Endothelial cell of umbilical vein (primary cell): ENCODE measurements at regions of chr13 and their contacts with region 1.

Region 1: GRCh38 chr13:106349080-106349931 is 186.2 kb downstream of the EFNB2 start:
- DNase-seq: peak; percentile 99
- H3K4me3 ChIP-seq: peak overlapping the region in 2 of 3 experiments; percentile 17 to 52
- H3K27ac ChIP-seq: peak overlapping the region; percentile 98
- H3K4me1 ChIP-seq: peaks cover 30% of the 10 kb centered on the region
- H3K27me3 ChIP-seq: no peaks in the 10 kb centered on the region
- CTCF ChIP-seq: no peak
- POLR2A ChIP-seq: peak; percentile 71

Region 2: DNA sequence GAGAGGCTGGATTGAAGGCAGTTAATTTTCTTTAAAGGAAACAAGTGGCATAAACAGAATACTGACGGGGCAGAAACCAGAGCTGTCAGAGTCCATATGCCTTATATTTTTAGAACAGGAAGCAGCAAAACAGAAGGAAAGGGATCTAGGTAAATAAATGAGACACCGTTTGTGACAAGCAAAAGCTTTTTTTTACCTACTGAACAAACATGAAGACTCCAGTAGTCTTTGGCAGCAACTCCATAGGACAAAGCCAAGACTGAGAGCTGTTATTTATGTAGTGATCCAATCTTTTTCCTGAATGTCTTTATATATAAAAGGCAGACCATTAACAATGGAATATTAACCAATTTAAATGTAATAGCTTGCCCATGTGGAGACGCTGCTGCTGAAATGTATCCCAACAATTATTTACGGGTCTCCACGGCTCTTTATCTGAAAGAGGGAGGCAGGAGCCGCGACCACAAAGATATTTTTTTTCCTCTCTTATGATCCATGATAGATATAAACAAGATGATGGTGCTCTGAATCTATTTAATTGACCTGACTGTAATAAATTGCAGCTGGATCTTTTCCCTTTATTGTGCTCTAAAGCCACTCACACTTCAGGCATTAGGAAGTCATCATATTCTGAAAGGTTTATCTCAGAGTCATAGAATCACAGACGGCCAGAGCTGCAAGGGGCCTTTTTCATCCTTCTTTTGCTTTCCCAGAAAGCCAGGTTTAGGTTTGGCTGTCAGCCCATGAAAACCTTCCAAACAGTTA is 501.6 kb before region 1 on chr13:
- CTCF ChIA-PET with region 1: no interaction called
- POLR2A ChIA-PET with region 1: no interaction called
- dilution Hi-C with region 1: no loop called
- intact Hi-C with region 1: no loop called
- DNase-seq: peak; percentile 73
- H3K4me3 ChIP-seq: no peak overlapping the region
- H3K27ac ChIP-seq: no peak overlapping the region
- H3K4me1 ChIP-seq: no peaks in the 10 kb centered on the region
- H3K27me3 ChIP-seq: no peaks in the 10 kb centered on the region
- CTCF ChIP-seq: no peak
- POLR2A ChIP-seq: no peak

Region 3: GRCh38 chr13:106104281-106104901 is 244.9 kb before region 1 on chr13:
- CTCF ChIA-PET with region 1: no interaction called
- POLR2A ChIA-PET with region 1: no interaction called
- dilution Hi-C with region 1: no loop called
- intact Hi-C with region 1: loop called (anchors 2 kb)
- DNase-seq: peak; percentile 83
- H3K4me3 ChIP-seq: no peak overlapping the region
- H3K27ac ChIP-seq: peak overlapping the region; percentile 68
- H3K4me1 ChIP-seq: peaks cover 28% of the 10 kb centered on the region
- H3K27me3 ChIP-seq: no peaks in the 10 kb centered on the region
- CTCF ChIP-seq: no peak
- POLR2A ChIP-seq: no peak

Region 4: GRCh38 chr13:106286811-106287210 is 62.5 kb before region 1 on chr13:
- CTCF ChIA-PET with region 1: no interaction called
- POLR2A ChIA-PET with region 1: no interaction called
- dilution Hi-C with region 1: no loop called
- intact Hi-C with region 1: no loop called
- DNase-seq: no peak
- H3K4me3 ChIP-seq: no peak overlapping the region
- H3K27ac ChIP-seq: no peak overlapping the region
- H3K4me1 ChIP-seq: peaks cover 9% of the 10 kb centered on the region
- H3K27me3 ChIP-seq: no peaks in the 10 kb centered on the region
- CTCF ChIP-seq: no peak
- POLR2A ChIP-seq: no peak

Region 5: DNA sequence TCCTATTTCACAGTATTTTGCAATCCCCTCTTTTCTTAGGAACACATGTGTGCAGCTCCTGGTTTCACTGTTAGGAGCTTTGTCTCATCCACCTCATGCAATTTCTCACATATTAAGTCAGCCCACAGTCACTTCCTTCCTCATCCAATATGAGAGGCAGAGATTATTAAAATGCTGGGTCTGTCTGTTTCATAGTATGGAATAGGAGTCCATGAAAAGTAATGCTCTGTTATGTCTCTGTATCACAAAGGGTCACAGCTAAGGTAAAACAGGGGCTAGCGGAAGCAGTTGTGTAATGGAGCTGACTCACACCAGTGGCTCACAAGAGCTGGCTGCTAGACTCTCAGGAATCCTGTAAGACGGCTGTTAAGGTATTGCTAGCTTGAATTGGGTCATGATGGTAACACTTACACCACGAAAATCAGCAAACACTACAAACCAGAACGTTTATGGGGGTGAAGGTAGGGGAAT is 30.3 kb before region 1 on chr13:
- CTCF ChIA-PET with region 1: interaction called, 3 read pairs
- POLR2A ChIA-PET with region 1: no interaction called
- dilution Hi-C with region 1: no loop called
- intact Hi-C with region 1: loop called (anchors 1 kb)
- DNase-seq: peak; percentile 97
- H3K4me3 ChIP-seq: no peak overlapping the region
- H3K27ac ChIP-seq: peak overlapping the region; percentile 89
- H3K4me1 ChIP-seq: peaks cover 20% of the 10 kb centered on the region
- H3K27me3 ChIP-seq: no peaks in the 10 kb centered on the region
- CTCF ChIP-seq: no peak
- POLR2A ChIP-seq: peak; percentile 38

Region 6: DNA sequence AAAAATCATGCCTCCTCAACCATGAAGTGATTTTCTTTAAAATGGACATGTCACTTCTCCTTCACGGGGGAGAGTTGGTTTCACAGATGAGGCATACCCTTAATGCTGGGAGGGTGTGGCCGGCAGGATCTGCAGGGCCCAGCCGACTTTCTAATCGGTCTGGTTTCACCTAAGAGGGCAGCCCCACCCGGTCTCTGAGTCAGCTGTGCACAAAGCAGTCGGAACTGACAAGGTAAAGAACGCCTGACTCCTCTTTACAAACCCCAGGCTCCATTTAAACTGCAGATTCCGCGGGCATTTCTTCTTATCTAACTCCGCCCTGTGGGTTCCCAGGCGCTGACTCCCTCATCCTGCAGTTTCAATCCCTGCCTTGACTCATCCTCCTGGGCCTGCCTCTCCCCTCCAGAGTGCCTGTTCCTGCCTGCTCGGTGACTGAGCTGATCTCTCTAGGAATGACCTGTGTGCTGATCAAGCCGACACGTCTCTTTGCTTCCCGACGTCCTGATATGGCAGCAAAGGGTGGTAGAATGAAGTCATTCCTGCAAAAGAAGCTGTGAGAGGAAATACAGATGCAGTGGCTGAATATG is 122.7 kb after region 1 on chr13:
- CTCF ChIA-PET with region 1: no interaction called
- POLR2A ChIA-PET with region 1: no interaction called
- dilution Hi-C with region 1: no loop called
- intact Hi-C with region 1: loop called (anchors 1 kb)
- DNase-seq: peak; percentile 77
- H3K4me3 ChIP-seq: no peak overlapping the region
- H3K27ac ChIP-seq: no peak overlapping the region
- H3K4me1 ChIP-seq: peaks cover 8% of the 10 kb centered on the region
- H3K27me3 ChIP-seq: no peaks in the 10 kb centered on the region
- CTCF ChIP-seq: no peak
- POLR2A ChIP-seq: no peak